Endothelial cell of umbilical vein (primary cell): ENCODE measurements at regions of chr5 and their contacts with region 1.

Region 1: DNA sequence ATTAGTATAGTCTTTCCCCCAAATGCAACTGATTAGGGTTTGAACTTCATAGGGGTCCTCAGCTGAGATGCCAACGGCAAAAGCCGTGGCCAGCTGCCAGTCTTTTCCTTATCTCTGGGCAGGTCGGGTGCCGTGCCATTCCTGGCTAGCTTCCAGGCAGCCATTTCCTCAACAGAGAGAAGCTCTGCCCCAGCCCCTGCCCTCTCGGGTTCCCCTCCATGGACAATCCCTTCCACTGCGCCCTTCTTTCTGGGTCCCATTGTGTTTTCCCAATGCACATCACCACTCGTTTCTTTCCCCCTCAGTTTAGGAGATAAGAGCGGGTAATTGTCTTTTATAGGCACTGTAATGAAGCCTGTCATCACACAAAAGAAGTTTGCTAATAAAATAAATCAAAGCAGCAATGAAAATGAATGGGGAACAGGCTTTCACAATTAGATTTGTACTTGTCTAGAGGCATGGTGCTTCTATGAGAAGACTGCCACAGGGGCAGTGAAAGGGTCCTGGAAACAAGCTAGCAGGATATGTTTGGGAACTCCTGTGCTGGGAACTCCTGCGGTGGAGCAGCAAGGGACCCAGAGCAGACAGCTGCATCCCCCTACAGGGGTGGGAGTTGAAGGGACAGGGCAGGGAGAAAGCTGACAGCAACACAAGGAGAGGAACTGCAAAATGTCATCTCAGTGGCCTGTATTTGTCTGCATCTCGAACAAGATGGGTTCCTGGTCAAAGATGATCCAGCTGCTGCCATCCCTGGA is 48.0 kb upstream of the SAP30L start:
- DNase-seq: peak; percentile 63
- H3K4me3 ChIP-seq: no peak overlapping the region
- H3K27ac ChIP-seq: no peak overlapping the region
- H3K4me1 ChIP-seq: peaks cover 10% of the 10 kb centered on the region
- H3K27me3 ChIP-seq: no peaks in the 10 kb centered on the region
- CTCF ChIP-seq: peak in 1 of 2 donors; percentile 53
- POLR2A ChIP-seq: no peak

Region 2: GRCh38 chr5:154189819-154190594 is 207.8 kb before region 1 on chr5:
- CTCF ChIA-PET with region 1: interaction called, 100 read pairs
- POLR2A ChIA-PET with region 1: interaction called, 4 read pairs
- dilution Hi-C with region 1: no loop called
- intact Hi-C with region 1: no loop called
- DNase-seq: peak; percentile 55
- H3K4me3 ChIP-seq: peak overlapping the region; percentile 51 to 80 (median 56)
- H3K27ac ChIP-seq: peak overlapping the region; percentile 61
- H3K4me1 ChIP-seq: peaks cover 19% of the 10 kb centered on the region
- H3K27me3 ChIP-seq: no peaks in the 10 kb centered on the region
- CTCF ChIP-seq: peak; percentile 49 to 69
- POLR2A ChIP-seq: peak; percentile 56

Region 3: GRCh38 chr5:154196955-154197652 is 200.7 kb before region 1 on chr5:
- CTCF ChIA-PET with region 1: interaction called, 100 read pairs
- POLR2A ChIA-PET with region 1: interaction called, 4 read pairs
- dilution Hi-C with region 1: no loop called
- intact Hi-C with region 1: no loop called
- DNase-seq: peak; percentile 81
- H3K4me3 ChIP-seq: no peak overlapping the region
- H3K27ac ChIP-seq: peak overlapping the region; percentile 12
- H3K4me1 ChIP-seq: peaks cover 43% of the 10 kb centered on the region
- H3K27me3 ChIP-seq: no peaks in the 10 kb centered on the region
- CTCF ChIP-seq: peak in 1 of 2 donors; percentile 26
- POLR2A ChIP-seq: no peak